Activated naive CD4-positive, alpha-beta T cell treated with anti-CD3 and anti-CD28 coated beads, Interleukin-2, amount 10 ng/mL, durations not matched to agents 7 days and 5 days (primary cell): ENCODE measurements at regions of chr17 and their contacts with region 1.

Region 1: GRCh38 chr17:63859257-63859656 is 14.2 kb downstream of the CSH2 start:
- DNase-seq: no peak
- H3K4me3 Mint-ChIP-seq: no peak overlapping the region
- H3K27ac Mint-ChIP-seq: no peak overlapping the region
- H3K4me1 Mint-ChIP-seq: no peaks in the 10 kb centered on the region
- H3K27me3 Mint-ChIP-seq: peaks cover 68% of the 10 kb centered on the region

Region 2: GRCh38 chr17:63848834-63849700 is 10.2 kb before region 1 on chr17:
- CTCF ChIA-PET with region 1: interaction called, 28 read pairs
- DNase-seq: peak; percentile 96
- H3K4me3 Mint-ChIP-seq: peak overlapping the region; percentile 71
- H3K27ac Mint-ChIP-seq: peak overlapping the region; percentile 93
- H3K4me1 Mint-ChIP-seq: peaks cover 30% of the 10 kb centered on the region
- H3K27me3 Mint-ChIP-seq: peaks cover 41% of the 10 kb centered on the region

Region 3: DNA sequence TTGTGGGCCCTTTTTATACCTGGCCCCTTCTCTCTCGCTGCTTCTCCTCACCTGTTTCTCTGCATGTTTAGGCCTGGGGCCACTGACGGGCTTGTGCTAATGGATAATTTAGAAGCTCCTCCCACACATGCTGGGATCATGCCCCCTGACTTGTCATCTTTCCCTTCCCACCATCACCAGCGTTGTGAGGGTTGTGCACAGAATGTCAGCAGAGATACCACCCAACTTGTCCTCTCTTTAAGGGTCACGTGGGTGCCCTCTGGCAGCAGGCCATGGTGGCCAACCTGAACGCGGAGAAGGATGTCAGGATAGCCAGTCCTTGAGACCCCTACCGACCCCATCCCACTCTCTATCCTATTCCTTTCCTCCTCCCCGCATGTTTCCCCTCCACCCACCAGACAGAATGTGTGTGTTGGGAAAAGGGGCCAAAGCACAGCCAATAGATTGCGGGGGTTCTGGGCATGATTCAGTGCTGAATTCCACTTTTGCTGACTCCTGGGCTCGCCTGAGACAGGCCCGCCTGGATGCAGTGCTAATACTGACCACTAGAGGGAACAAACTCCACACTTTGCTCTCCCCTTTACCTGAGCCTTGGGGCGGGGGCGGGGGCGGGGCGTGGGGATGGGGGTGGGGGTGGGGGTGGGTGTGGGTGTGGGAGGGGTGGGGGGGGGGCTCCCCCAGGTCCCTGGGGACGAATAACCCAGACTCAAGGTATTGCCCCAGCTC is 22.8 kb after region 1 on chr17 and contains the start of gene GH2:
- CTCF ChIA-PET with region 1: interaction called, 10 read pairs
- DNase-seq: peak; percentile 77
- H3K4me3 Mint-ChIP-seq: no peak within 1 kb of the TSS
- H3K27ac Mint-ChIP-seq: no peak within 1 kb of the TSS
- H3K4me1 Mint-ChIP-seq: no peaks in the 10 kb centered on the region
- H3K27me3 Mint-ChIP-seq: peaks cover 54% of the 10 kb centered on the region